Activated CD4-positive, alpha-beta T cell treated with anti-CD3 and anti-CD28 coated beads for 36 hours (primary cell): ENCODE measurements at regions of chr3 and their contacts with region 1.

Region 1: GRCh38 chr3:72255791-72256559 is 471.0 kb upstream of the PROK2 start:
- DNase-seq: peak; percentile 54
- ATAC-seq: no peak
- H3K4me3 Mint-ChIP-seq: no peak overlapping the region
- H3K27ac Mint-ChIP-seq: no peak overlapping the region
- H3K4me1 Mint-ChIP-seq: peaks cover 43% of the 10 kb centered on the region
- H3K27me3 Mint-ChIP-seq: peaks cover 2% of the 10 kb centered on the region

Region 2: DNA sequence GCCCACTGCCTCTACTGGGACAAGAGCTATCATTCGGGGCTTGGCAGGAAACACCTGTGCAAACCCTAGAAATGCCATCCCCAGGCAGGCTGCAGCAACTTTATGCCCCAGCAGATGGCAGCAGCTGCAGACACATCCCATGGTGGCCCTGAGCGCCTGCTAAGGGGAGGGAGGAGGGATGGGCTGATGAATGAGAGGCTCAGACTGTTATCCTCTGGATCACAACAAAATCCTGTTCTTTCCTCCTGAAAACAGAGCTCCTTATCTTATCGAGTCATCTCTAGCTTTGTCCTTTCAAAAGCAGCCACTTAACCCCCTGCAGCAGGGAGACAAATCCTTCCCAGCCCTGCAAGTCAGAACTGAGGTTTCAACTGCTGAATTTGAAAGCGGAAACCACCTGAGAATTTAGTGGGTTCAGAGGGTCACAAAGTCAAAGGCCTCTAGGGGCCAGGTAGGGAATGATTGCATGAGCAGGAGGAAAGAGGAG is 380.5 kb before region 1 on chr3:
- CTCF ChIA-PET with region 1: interaction called, 3 read pairs
- POLR2A ChIA-PET with region 1: no interaction called
- intact Hi-C with region 1: loop called (anchors 2 to 10 kb)
- DNase-seq: peak; percentile 90
- ATAC-seq: peak; percentile 90
- H3K4me3 Mint-ChIP-seq: no peak overlapping the region
- H3K27ac Mint-ChIP-seq: peak overlapping the region; percentile 89
- H3K4me1 Mint-ChIP-seq: peaks cover 35% of the 10 kb centered on the region
- H3K27me3 Mint-ChIP-seq: peaks cover 6% of the 10 kb centered on the region

Region 3: GRCh38 chr3:71984843-71985613 is 270.9 kb before region 1 on chr3:
- CTCF ChIA-PET with region 1: no interaction called
- POLR2A ChIA-PET with region 1: no interaction called
- intact Hi-C with region 1: loop called in 1 of 2 experiments (anchors 2 kb)
- DNase-seq: peak; percentile 69
- ATAC-seq: peak; percentile 84
- H3K4me3 Mint-ChIP-seq: peak overlapping the region; percentile 1
- H3K27ac Mint-ChIP-seq: peak overlapping the region; percentile 64
- H3K4me1 Mint-ChIP-seq: peaks cover 47% of the 10 kb centered on the region
- H3K27me3 Mint-ChIP-seq: peaks cover 4% of the 10 kb centered on the region

Region 4: GRCh38 chr3:72134989-72135451 is 121.0 kb before region 1 on chr3:
- CTCF ChIA-PET with region 1: no interaction called
- POLR2A ChIA-PET with region 1: no interaction called
- intact Hi-C with region 1: loop called in 1 of 2 experiments (anchors 5 kb)
- DNase-seq: peak; percentile 16
- ATAC-seq: peak; percentile 62
- H3K4me3 Mint-ChIP-seq: peak overlapping the region; percentile 54
- H3K27ac Mint-ChIP-seq: peak overlapping the region; percentile 85
- H3K4me1 Mint-ChIP-seq: peaks cover 48% of the 10 kb centered on the region
- H3K27me3 Mint-ChIP-seq: peaks cover 2% of the 10 kb centered on the region

Region 5: DNA sequence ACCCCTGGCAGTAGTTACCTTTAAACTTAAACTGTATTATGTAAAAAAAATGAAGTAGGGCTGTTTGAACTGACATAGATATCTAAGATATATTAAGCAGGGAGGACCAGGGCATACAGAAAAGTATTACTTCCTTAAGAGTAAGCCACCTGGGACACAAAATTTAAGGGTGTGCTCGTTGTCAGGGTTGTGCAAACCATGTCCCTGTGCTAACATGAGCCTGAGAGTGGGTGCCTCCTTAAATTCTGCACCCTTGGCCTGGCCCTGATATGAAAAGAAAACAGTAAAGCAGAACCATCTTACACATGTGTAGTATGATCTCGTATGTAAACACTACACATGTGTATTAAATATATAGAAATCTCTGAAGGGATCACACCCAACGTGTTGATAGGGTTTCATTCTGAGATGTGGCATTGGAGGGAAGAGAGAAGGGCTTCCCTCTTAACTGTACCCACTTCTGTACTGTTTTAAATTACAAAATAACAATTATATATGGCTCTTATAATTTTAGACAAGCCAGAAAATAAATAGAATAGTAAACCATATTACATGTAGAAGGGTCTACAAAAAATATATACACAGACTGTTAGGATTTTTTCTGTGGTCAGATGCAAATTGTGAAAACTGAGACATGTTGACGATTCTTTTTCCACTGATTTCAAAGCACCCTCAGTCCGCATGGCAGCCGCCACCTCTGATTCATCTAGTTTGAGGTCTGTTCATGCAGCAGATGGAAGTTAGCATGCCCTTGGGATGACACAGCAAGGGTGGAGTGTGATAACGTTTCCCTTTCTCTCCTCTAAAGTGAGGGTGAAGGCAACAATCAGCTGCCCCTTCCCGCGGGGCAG is 70.2 kb before region 1 on chr3:
- CTCF ChIA-PET with region 1: no interaction called
- POLR2A ChIA-PET with region 1: interaction called, 3 read pairs
- intact Hi-C with region 1: loop called in 1 of 2 experiments (anchors 5 kb)
- DNase-seq: peak; percentile 77
- ATAC-seq: peak; percentile 94
- H3K4me3 Mint-ChIP-seq: no peak overlapping the region
- H3K27ac Mint-ChIP-seq: peak overlapping the region; percentile 26
- H3K4me1 Mint-ChIP-seq: peaks cover 15% of the 10 kb centered on the region
- H3K27me3 Mint-ChIP-seq: peaks cover 13% of the 10 kb centered on the region

Region 6: GRCh38 chr3:72439321-72440183 is 183.6 kb after region 1 on chr3:
- CTCF ChIA-PET with region 1: no interaction called
- POLR2A ChIA-PET with region 1: no interaction called
- intact Hi-C with region 1: loop called in 1 of 2 experiments (anchors 5 kb)
- DNase-seq: no peak
- ATAC-seq: no peak
- H3K4me3 Mint-ChIP-seq: no peak overlapping the region
- H3K27ac Mint-ChIP-seq: no peak overlapping the region
- H3K4me1 Mint-ChIP-seq: peaks cover 85% of the 10 kb centered on the region
- H3K27me3 Mint-ChIP-seq: no peaks in the 10 kb centered on the region

Region 7: GRCh38 chr3:72523429-72524151 is 267.6 kb after region 1 on chr3:
- CTCF ChIA-PET with region 1: no interaction called
- POLR2A ChIA-PET with region 1: no interaction called
- intact Hi-C with region 1: loop called in 1 of 2 experiments (anchors 1 kb)
- DNase-seq: no peak
- ATAC-seq: no peak
- H3K4me3 Mint-ChIP-seq: no peak overlapping the region
- H3K27ac Mint-ChIP-seq: peak overlapping the region; percentile 55
- H3K4me1 Mint-ChIP-seq: peaks cover 45% of the 10 kb centered on the region
- H3K27me3 Mint-ChIP-seq: no peaks in the 10 kb centered on the region

Region 8: DNA sequence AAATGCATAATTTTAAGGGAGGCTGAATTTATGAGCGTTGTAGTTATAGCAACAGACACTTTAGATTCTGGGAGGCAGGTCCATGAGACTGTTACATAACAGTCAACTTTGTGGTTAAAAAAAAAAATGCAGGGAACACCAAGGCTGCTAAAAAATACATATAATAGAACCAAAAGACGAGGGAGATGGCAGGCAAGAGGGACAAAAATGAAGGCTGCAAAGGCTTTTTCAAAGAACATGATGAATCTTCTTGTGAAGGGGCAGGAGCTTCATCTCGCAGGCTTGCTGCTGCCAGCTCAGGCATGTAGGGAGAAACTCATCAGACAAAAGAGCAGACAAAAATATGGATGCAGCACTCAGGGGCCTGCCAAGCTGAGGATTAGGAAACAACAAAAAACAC is 348.4 kb after region 1 on chr3:
- CTCF ChIA-PET with region 1: no interaction called
- POLR2A ChIA-PET with region 1: no interaction called
- intact Hi-C with region 1: no loop called
- DNase-seq: no peak
- ATAC-seq: no peak
- H3K4me3 Mint-ChIP-seq: no peak overlapping the region
- H3K27ac Mint-ChIP-seq: no peak overlapping the region
- H3K4me1 Mint-ChIP-seq: no peaks in the 10 kb centered on the region
- H3K27me3 Mint-ChIP-seq: peaks cover 3% of the 10 kb centered on the region